ENCODE measurements at regions of chr16 and their contacts with region 1.

Region 1: GRCh38 chr16:14501331-14502255 is 128.5 kb downstream of the PARN start:
- DNase-seq: peak; percentile 94
- ATAC-seq: peak; percentile 88
- H3K4me3 ChIP-seq: no peak overlapping the region
- H3K27ac ChIP-seq: peak overlapping the region; percentile 77
- H3K4me1 ChIP-seq: peaks cover 25% of the 10 kb centered on the region
- H3K27me3 ChIP-seq: no peaks in the 10 kb centered on the region
- CTCF ChIP-seq: no peak
- POLR2A ChIP-seq: no peak
- RAD21 ChIP-seq: no peak

Region 2: DNA sequence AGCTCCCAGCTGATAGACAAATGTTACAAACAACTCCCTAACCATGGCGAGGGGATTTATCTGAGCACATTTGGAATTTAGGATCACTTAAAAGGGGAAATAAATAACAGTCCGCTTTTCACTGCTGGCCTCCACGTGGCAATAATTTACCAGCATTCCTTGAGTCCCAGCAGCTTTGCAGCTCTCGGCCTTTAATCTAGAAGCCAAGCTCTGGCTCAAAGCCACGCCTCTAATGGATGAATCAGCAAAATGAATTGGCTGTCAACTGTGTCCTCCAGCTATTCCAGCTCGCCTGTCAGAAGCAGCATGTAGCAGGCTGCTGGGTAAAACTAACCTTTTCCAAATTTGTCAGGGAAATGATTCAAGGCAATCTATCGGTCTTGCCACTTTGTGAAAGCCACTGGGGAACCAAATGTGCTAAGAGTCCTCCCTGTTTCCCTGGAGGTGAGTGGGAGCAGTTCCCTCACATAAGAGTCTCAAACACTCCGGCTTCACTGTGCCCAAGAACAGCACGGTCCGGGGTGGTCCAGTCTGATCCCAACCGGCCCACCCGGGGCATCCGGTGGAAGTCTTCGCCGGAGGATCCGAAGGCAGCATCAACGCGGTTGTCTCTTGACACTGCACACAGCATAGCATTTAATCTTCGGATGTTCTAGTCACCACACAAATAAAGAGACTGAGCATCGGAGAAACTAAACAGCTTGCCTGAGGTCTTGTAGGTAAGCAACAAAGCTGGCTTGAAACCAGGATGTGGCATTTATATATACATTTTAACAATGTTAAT is 14.9 kb before region 1 on chr16:
- CTCF ChIA-PET with region 1: interaction called, 12 read pairs
- POLR2A ChIA-PET with region 1: interaction called, 6 read pairs
- dilution Hi-C with region 1: no loop called
- in situ Hi-C with region 1: no loop called
- intact Hi-C with region 1: loop called (anchors 1 kb)
- DNase-seq: peak; percentile 94
- ATAC-seq: peak; percentile 91
- H3K4me3 ChIP-seq: peak overlapping the region; percentile 2; the same call in 1 of the 2 replicates
- H3K27ac ChIP-seq: peak overlapping the region; percentile 44
- H3K4me1 ChIP-seq: peaks cover 17% of the 10 kb centered on the region
- H3K27me3 ChIP-seq: no peaks in the 10 kb centered on the region
- CTCF ChIP-seq: no peak
- POLR2A ChIP-seq: no peak
- RAD21 ChIP-seq: no peak